ENCODE measurements at regions of chr11 and their contacts with region 1.

Region 1: GRCh38 chr11:81394311-81394710 is 1339.4 kb downstream of the FAM181B start:
- DNase-seq: no peak
- H3K4me3 ChIP-seq: no peak overlapping the region
- H3K27ac ChIP-seq: no peak overlapping the region
- H3K4me1 ChIP-seq: no peaks in the 10 kb centered on the region
- H3K27me3 ChIP-seq: no peaks in the 10 kb centered on the region
- CTCF ChIP-seq: no peak

Region 2: DNA sequence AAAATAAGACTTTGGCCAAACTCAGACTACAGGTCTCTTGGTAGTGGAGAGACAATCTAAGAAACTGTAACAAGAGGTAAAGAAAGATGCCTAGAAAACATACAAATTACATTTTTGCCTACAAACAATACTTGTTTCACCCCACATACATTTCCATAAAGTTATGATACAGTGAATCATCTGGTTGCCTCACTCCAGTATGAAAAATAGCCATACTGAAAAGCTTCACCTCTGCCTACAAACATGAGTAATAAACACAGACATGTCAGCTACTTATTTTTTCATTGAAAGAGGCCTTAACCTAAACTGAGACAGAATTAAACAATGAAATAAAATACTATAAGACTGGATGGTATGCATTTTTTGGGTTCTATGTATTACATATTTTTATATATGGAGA is 123.6 kb before region 1 on chr11:
- CTCF ChIA-PET with region 1: no interaction called
- POLR2A ChIA-PET with region 1: interaction called, 19 read pairs
- intact Hi-C with region 1: no loop called
- DNase-seq: peak in 1 of 2 experiments; percentile 29
- H3K4me3 ChIP-seq: no peak overlapping the region
- H3K27ac ChIP-seq: no peak overlapping the region
- H3K4me1 ChIP-seq: no peaks in the 10 kb centered on the region
- H3K27me3 ChIP-seq: no peaks in the 10 kb centered on the region
- CTCF ChIP-seq: no peak